Endothelial cell of umbilical vein (primary cell): ENCODE measurements at regions of chr7 and their contacts with region 1.

Region 1: DNA sequence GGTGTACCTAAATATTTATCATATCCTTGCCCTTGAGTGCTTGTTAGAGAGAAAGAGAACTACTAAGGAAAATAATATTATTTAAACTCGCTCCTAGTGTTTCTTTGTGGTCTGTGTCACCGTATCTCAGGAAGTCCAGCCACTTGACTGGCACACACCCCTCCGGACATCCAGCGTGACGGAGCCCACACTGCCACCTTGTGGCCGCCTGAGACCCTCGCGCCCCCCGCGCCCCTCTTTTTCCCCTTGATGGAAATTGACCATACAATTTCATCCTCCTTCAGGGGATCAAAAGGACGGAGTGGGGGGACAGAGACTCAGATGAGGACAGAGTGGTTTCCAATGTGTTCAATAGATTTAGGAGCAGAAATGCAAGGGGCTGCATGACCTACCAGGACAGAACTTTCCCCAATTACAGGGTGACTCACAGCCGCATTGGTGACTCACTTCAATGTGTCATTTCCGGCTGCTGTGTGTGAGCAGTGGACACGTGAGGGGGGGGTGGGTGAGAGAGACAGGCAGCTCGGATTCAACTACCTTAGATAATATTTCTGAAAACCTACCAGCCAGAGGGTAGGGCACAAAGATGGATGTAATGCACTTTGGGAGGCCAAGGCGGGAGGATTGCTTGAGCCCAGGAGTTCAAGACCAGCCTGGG is 11.4 kb downstream of the SERPINE1 start:
- DNase-seq: peak; percentile 99
- H3K4me3 ChIP-seq: no peak overlapping the region
- H3K27ac ChIP-seq: peak overlapping the region; percentile 30
- H3K4me1 ChIP-seq: peaks cover 39% of the 10 kb centered on the region
- H3K27me3 ChIP-seq: no peaks in the 10 kb centered on the region
- CTCF ChIP-seq: peak; percentile 64 to 75
- POLR2A ChIP-seq: peak; percentile 82

Region 2: GRCh38 chr7:101094416-101095375 is 43.6 kb before region 1 on chr7:
- CTCF ChIA-PET with region 1: interaction called, 21 read pairs
- POLR2A ChIA-PET with region 1: interaction called, 26 read pairs
- dilution Hi-C with region 1: no loop called
- intact Hi-C with region 1: loop called (anchors 1 kb)
- DNase-seq: peak; percentile 63
- H3K4me3 ChIP-seq: no peak overlapping the region
- H3K27ac ChIP-seq: peak overlapping the region; percentile 41
- H3K4me1 ChIP-seq: peaks cover 22% of the 10 kb centered on the region
- H3K27me3 ChIP-seq: no peaks in the 10 kb centered on the region
- CTCF ChIP-seq: peak; percentile 80 to 81
- POLR2A ChIP-seq: no peak

Region 3: GRCh38 chr7:101126651-101127280 is 11.6 kb before region 1 on chr7 and contains the start of gene SERPINE1:
- CTCF ChIA-PET with region 1: interaction called, 12 read pairs
- POLR2A ChIA-PET with region 1: interaction called, 27 read pairs
- dilution Hi-C with region 1: no loop called
- intact Hi-C with region 1: loop called (anchors 1 kb)
- DNase-seq: peak; percentile 98
- H3K4me3 ChIP-seq: peak within 1 kb of the TSS; percentile 87 to 98 (median 88)
- H3K27ac ChIP-seq: peak within 1 kb of the TSS; percentile 83
- H3K4me1 ChIP-seq: peaks cover 57% of the 10 kb centered on the region
- H3K27me3 ChIP-seq: no peaks in the 10 kb centered on the region
- CTCF ChIP-seq: peak; percentile 24 to 26
- POLR2A ChIP-seq: peak; percentile 100
- total RNA-seq, gene SERPINE1: 2,296 and 2,645 TPM in 2 replicates

Region 4: GRCh38 chr7:101173752-101174244 is 35.5 kb after region 1 on chr7:
- CTCF ChIA-PET with region 1: interaction called, 49 read pairs
- POLR2A ChIA-PET with region 1: no interaction called
- dilution Hi-C with region 1: no loop called
- intact Hi-C with region 1: no loop called
- DNase-seq: peak; percentile 26
- H3K4me3 ChIP-seq: no peak overlapping the region
- H3K27ac ChIP-seq: no peak overlapping the region
- H3K4me1 ChIP-seq: no peaks in the 10 kb centered on the region
- H3K27me3 ChIP-seq: peaks cover 80 to 83% of the 10 kb centered on the region in 2 experiments
- CTCF ChIP-seq: no peak
- POLR2A ChIP-seq: no peak

Region 5: GRCh38 chr7:101244375-101245146 is 106.2 kb after region 1 on chr7 and contains the start of gene FIS1:
- CTCF ChIA-PET with region 1: interaction called, 54 read pairs
- POLR2A ChIA-PET with region 1: no interaction called
- dilution Hi-C with region 1: no loop called
- intact Hi-C with region 1: no loop called
- DNase-seq: peak; percentile 93
- H3K4me3 ChIP-seq: peak within 1 kb of the TSS; percentile 64 to 89 (median 76)
- H3K27ac ChIP-seq: peak within 1 kb of the TSS; percentile 63
- H3K4me1 ChIP-seq: peaks cover 20% of the 10 kb centered on the region
- H3K27me3 ChIP-seq: no peaks in the 10 kb centered on the region
- CTCF ChIP-seq: peak; percentile 95 to 96
- POLR2A ChIP-seq: peak; percentile 96
- total RNA-seq, gene FIS1: 132 and 187 TPM in 2 replicates

Region 6: DNA sequence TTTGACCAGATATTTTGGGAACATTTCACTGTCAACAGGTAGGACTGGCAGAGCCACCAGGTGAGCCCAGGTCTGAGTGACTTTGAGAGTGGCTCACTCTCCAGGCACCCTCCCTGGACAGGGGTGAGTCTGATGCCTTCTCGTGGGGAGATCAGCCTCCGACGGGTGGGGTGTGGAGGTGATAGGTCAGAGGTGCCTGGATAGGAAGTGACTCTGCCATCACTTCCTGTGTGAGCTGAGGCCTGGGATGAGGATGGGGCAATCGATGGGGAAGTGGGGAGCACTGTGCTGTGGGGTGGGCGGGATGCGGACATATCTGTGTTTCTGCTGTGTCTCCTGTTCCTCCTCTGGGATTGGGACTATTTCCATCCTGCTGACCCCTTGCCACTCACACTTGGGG is 148.7 kb after region 1 on chr7:
- CTCF ChIA-PET with region 1: interaction called, 324 read pairs
- POLR2A ChIA-PET with region 1: interaction called, 3 read pairs
- dilution Hi-C with region 1: no loop called
- intact Hi-C with region 1: no loop called
- DNase-seq: no peak
- H3K4me3 ChIP-seq: no peak overlapping the region
- H3K27ac ChIP-seq: no peak overlapping the region
- H3K4me1 ChIP-seq: no peaks in the 10 kb centered on the region
- H3K27me3 ChIP-seq: peaks cover 7 to 9% of the 10 kb centered on the region in 2 experiments
- CTCF ChIP-seq: no peak
- POLR2A ChIP-seq: no peak